ENCODE measurements at regions of chr7 and their contacts with region 1.

Region 1: DNA sequence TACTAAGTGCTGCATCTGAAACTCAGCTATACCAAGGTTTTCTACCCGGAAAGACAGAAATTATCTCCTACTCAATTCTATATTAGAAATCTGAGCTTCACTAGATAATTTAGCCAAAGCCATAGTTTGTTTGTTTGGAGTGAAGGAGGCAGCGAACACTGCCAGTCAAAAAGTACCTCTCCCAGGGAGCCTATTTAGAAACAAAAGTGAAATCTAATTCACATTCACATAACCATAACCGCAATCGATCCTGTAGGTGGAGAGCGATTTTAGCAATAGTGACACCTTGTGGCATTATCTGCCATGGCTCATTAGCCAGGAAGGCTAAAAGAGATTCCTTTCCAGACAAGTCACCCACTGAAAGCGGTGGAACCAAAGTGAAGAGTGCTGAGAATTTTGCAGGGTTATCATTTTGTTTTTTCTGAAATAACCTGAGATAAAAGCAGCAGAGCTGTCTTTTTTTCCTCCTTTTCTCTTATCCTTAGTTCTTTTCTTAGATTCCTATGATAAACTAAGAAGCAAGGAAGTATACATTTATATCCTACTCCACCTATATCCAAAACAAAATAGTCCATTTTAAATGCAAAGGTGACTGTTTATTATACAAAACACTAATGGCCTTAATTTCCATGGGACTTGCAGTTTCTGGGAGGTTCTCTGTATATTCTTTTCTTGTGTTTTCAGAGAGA is 83.7 kb upstream of the BET1 start:
- H3K4me3 ChIP-seq: no peak overlapping the region
- H3K27ac ChIP-seq: no peak overlapping the region
- H3K4me1 ChIP-seq: no peaks in the 10 kb centered on the region
- CTCF ChIP-seq: peak; percentile 71

Region 2: GRCh38 chr7:93799750-93800357 is 288.0 kb before region 1 on chr7:
- CTCF ChIA-PET with region 1: interaction called, 19 read pairs
- POLR2A ChIA-PET with region 1: no interaction called
- H3K4me3 ChIP-seq: no peak overlapping the region
- H3K27ac ChIP-seq: no peak overlapping the region
- H3K4me1 ChIP-seq: no peaks in the 10 kb centered on the region
- CTCF ChIP-seq: no peak

Region 3: GRCh38 chr7:93902777-93903423 is 184.9 kb before region 1 on chr7:
- CTCF ChIA-PET with region 1: interaction called, 42 read pairs
- POLR2A ChIA-PET with region 1: no interaction called
- H3K4me3 ChIP-seq: no peak overlapping the region
- H3K27ac ChIP-seq: no peak overlapping the region
- H3K4me1 ChIP-seq: no peaks in the 10 kb centered on the region
- CTCF ChIP-seq: 0 out of 2 replicates have a peak, but pooled peaks have one; percentile 27

Region 4: DNA sequence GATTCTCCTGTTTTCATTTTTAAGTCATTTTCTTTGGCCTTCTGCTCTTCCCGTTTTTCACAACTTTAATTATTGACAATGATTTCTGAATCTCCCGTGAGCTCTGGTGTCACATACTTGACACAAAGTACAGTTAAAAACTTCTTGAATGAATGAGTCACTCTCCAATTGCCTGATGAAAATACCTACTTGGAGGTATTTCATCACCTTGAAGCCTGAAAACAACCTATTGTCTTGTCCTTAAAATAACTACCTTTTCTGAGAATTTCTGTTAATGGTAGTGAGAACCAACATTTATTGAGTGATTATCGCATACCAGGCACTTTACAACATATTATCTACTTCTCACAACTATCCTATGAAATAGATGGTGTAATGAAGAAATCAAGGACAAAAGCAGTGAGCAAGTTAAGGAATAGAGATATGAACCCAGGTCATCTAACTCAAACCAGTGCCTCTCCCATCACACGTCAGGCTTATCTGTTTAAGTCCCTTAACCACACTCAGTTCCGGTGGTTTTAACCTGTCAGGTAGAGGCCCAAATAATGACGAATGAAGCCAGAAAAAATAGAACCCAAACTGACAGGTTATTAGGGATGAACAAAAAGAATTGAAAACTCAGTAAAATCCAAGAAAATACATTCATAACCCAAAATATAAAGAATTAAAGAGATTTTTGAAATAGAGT is 95.2 kb before region 1 on chr7:
- CTCF ChIA-PET with region 1: no interaction called
- POLR2A ChIA-PET with region 1: no interaction called
- H3K4me3 ChIP-seq: no peak overlapping the region
- H3K27ac ChIP-seq: no peak overlapping the region
- H3K4me1 ChIP-seq: no peaks in the 10 kb centered on the region
- CTCF ChIP-seq: no peak

Region 5: DNA sequence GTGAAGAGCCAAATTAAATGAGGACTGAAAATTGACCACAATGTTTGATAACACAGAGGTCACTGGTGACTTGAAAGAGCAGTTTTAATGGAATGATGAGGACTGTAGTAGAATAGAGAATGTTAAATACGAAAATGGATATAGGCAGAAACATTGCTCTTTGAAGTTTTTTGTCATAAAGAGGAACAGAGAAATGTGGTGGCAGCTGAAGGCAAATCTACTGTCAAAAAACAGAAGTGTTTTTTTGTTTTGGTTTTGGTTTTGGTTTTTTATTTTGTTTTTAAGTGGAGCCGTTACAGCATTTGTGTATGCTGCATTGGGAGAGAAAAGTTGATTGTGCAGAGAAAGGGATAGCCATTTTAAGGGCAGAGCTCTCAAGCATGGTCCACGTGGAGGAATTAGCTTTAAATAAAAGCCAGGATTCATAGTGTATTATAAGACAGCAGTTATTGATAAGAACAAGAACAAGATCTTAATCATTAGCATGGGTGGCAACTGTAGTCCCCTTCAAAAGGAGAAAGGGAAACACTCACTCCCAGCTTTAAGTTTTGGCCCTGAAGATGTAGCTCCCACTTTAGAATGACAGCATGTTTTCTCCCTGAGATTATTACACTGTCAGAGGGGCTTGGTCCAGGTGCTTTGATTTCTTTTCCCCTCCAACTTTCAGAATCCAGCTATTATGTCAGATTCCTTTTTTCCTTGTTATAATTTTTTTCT is 73.1 kb after region 1 on chr7:
- CTCF ChIA-PET with region 1: no interaction called
- POLR2A ChIA-PET with region 1: no interaction called
- H3K4me3 ChIP-seq: no peak overlapping the region
- H3K27ac ChIP-seq: no peak overlapping the region
- H3K4me1 ChIP-seq: no peaks in the 10 kb centered on the region
- CTCF ChIP-seq: no peak